ENCODE measurements at regions of chr17 and their contacts with region 1.

Region 1: GRCh38 chr17:43360739-43361505 is 37.9 kb upstream of the ARL4D start:
- DNase-seq: peak; percentile 88 to 98
- H3K4me3 ChIP-seq: peak overlapping the region; percentile 60 to 70 (median 67)
- H3K27ac ChIP-seq: peak overlapping the region; percentile 100
- H3K4me1 ChIP-seq: peaks cover 2 to 9% (median 3%) of the 10 kb centered on the region in 4 experiments; a peak in 5 of 7 replicates
- H3K27me3 ChIP-seq: peaks cover 0 to 17% (median 7%) of the 10 kb centered on the region in 4 experiments; a peak in 5 of 7 replicates
- CTCF ChIP-seq: no peak
- EP300 ChIP-seq: peak in 1 of 2 experiments; percentile 80; a peak in 1 of 3 replicates
- POLR2A ChIP-seq: peak; percentile 100
- RAD21 ChIP-seq: peak in 1 of 2 experiments; percentile 30; a peak in 1 of 4 replicates

Region 2: GRCh38 chr17:43183921-43184320 is 177.0 kb before region 1 on chr17:
- CTCF ChIA-PET with region 1: no interaction called
- POLR2A ChIA-PET with region 1: no interaction called
- DNase-seq: no peak
- H3K4me3 ChIP-seq: no peak overlapping the region
- H3K27ac ChIP-seq: no peak overlapping the region
- H3K4me1 ChIP-seq: no peaks in the 10 kb centered on the region
- H3K27me3 ChIP-seq: no peaks in the 10 kb centered on the region
- CTCF ChIP-seq: no peak
- EP300 ChIP-seq: no peak
- POLR2A ChIP-seq: no peak
- RAD21 ChIP-seq: no peak

Region 3: DNA sequence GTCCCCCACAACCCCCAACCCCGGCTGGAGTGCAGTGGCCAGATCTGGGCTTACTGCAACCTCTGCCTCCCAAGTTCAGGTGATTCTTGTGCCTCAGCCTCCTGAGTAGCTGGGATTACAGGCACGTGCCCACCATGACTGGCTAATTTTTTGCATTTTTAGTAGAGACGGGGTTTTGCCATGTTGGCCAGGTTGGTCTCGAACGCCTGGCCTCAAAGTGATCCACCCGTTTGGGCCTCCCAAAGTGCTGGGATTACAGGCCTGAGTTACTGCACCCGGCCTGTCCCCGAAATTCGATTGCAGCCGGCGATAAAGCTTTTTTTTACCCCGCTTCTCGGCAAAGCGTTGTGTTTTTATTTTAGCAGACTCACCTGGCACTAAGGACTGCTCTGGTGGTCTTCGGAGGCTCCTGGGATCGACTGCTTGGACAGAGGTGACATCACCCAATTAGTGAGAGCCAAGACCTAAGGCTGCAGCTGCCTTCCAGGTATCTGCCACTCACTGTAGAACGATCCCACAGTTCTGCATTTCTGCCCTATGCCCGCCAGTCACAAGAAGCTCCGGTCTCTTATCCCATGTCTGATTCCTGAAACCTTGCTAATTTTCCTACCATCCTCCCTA is 44.3 kb before region 1 on chr17:
- CTCF ChIA-PET with region 1: no interaction called
- POLR2A ChIA-PET with region 1: interaction called, 65 read pairs
- DNase-seq: no peak
- H3K4me3 ChIP-seq: no peak overlapping the region
- H3K27ac ChIP-seq: no peak overlapping the region
- H3K4me1 ChIP-seq: no peaks in the 10 kb centered on the region; a peak in 1 of 7 replicates
- H3K27me3 ChIP-seq: no peaks in the 10 kb centered on the region
- CTCF ChIP-seq: no peak
- EP300 ChIP-seq: no peak
- POLR2A ChIP-seq: no peak
- RAD21 ChIP-seq: no peak

Region 4: DNA sequence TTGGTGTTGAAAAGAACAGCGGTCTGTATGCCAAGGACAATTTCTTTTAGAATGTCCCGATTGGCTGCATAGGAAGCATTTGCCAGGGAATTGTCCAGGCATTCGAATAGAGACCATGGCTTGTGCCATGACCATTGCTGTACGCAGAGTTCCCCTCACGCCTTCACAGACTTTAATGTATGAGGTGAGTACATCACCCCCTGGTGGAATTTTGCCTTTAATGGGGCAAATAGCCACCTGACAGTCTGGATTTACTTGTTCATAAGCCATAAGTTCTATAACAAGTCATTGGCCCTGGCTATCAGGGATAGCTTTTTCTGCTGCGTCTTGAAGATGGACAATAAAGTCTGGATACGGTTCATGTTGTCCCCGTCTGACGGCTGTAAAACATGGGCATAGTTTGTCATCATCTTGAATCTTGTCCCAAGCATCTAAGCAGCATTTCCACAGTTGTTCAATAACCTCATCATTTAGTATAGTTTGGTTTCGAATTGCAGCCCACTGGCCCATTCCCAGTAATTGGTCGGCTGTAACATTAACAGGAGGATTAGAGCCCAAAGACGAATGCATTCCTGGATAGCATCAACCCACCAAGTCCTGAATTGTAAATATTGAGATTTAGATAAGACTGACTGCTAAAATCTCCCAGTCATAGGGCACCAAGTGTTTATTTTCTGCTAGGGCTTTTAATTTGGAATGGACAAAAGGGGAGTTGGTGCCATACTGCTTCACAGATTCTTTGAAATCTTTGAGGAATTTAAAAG is 29.9 kb before region 1 on chr17:
- CTCF ChIA-PET with region 1: interaction called, 21 read pairs
- POLR2A ChIA-PET with region 1: interaction called, 46 read pairs
- DNase-seq: no peak
- H3K4me3 ChIP-seq: no peak overlapping the region
- H3K27ac ChIP-seq: no peak overlapping the region
- H3K4me1 ChIP-seq: peaks cover 0 to 2% (median 0%) of the 10 kb centered on the region in 4 experiments; a peak in 2 of 7 replicates
- H3K27me3 ChIP-seq: no peaks in the 10 kb centered on the region
- CTCF ChIP-seq: no peak
- EP300 ChIP-seq: no peak
- POLR2A ChIP-seq: no peak
- RAD21 ChIP-seq: peak in 1 of 2 experiments; percentile 22; a peak in 1 of 4 replicates

Region 5: GRCh38 chr17:43349142-43349541 is 11.8 kb before region 1 on chr17:
- CTCF ChIA-PET with region 1: interaction called, 7 read pairs
- POLR2A ChIA-PET with region 1: interaction called, 41 read pairs
- DNase-seq: no peak
- H3K4me3 ChIP-seq: no peak overlapping the region
- H3K27ac ChIP-seq: no peak overlapping the region
- H3K4me1 ChIP-seq: peaks cover 0 to 10% (median 1%) of the 10 kb centered on the region in 4 experiments; a peak in 3 of 7 replicates
- H3K27me3 ChIP-seq: no peaks in the 10 kb centered on the region
- CTCF ChIP-seq: peak in 2 of 3 experiments; percentile 29 to 47; a peak in 2 of 4 replicates
- EP300 ChIP-seq: no peak
- POLR2A ChIP-seq: no peak
- RAD21 ChIP-seq: peak; percentile 35 to 49; a peak in 3 of 4 replicates

Region 6: DNA sequence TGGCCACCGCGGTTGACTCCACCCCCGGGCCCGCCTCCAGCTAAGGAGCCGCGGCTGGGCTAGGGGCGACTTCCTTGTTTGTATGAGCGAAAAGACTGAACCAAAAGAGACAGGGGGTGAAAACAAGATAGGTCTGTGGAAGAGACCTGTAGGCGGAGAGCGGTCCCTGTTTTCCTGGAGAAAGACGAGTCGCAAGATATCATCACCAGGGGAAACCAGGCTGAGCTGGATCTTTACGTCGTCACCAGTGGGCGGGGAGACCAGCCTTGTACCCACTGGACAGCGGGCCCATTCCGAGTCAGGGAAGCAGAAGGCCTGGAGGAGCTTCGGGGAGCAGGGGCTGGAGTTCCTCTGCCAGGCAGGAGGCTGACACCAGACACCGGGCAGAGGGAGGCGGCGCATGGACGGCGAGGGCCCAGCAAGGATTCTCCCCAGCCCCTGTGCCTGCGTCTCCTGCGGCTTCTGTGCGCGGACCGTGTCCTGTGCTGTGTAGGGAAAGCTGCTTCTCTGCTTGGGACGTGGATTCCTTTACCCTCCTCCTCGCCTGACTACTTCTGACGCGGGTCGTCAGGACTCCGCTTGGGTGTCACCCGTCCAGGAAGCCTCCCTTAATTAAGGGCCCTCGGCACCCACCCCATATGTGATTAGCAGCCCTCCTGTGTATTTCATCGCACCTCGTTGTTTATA is 27.6 kb after region 1 on chr17:
- CTCF ChIA-PET with region 1: interaction called, 10 read pairs
- POLR2A ChIA-PET with region 1: interaction called, 184 read pairs
- DNase-seq: peak in 1 of 2 experiments; percentile 93
- H3K4me3 ChIP-seq: peak overlapping the region; percentile 58 to 81 (median 70)
- H3K27ac ChIP-seq: peak overlapping the region; percentile 85
- H3K4me1 ChIP-seq: peaks cover 0 to 3% (median 0%) of the 10 kb centered on the region in 4 experiments; a peak in 3 of 7 replicates
- H3K27me3 ChIP-seq: no peaks in the 10 kb centered on the region
- CTCF ChIP-seq: no peak
- EP300 ChIP-seq: peak in 1 of 2 experiments; percentile 55; a peak in 1 of 3 replicates
- POLR2A ChIP-seq: peak in 1 of 2 experiments; percentile 61; a peak in 1 of 3 replicates
- RAD21 ChIP-seq: no peak

Region 7: DNA sequence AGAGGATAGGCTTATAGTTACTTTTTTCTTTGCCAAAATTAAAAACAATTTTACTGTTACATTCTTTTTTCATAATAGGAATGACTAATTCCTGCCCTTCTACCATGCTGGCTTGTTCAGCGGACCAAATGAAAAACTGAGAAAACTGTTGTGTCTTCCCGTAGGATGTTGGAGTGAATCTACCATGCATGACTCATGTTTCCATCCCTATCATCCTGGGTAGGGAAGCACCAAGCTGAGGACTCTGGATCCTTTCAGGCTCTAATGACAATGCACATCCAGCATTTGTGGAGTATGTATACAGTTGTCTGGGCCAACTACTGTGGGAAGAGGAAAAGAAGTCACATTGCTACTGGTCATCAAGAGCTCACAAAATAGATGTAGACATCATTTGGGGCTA is 81.8 kb after region 1 on chr17:
- CTCF ChIA-PET with region 1: no interaction called
- POLR2A ChIA-PET with region 1: no interaction called
- DNase-seq: no peak
- H3K4me3 ChIP-seq: no peak overlapping the region
- H3K27ac ChIP-seq: no peak overlapping the region
- H3K4me1 ChIP-seq: peaks cover 0 to 2% (median 0%) of the 10 kb centered on the region in 4 experiments; a peak in 3 of 7 replicates
- H3K27me3 ChIP-seq: no peaks in the 10 kb centered on the region
- CTCF ChIP-seq: no peak
- EP300 ChIP-seq: no peak
- POLR2A ChIP-seq: no peak
- RAD21 ChIP-seq: no peak

Region 8: DNA sequence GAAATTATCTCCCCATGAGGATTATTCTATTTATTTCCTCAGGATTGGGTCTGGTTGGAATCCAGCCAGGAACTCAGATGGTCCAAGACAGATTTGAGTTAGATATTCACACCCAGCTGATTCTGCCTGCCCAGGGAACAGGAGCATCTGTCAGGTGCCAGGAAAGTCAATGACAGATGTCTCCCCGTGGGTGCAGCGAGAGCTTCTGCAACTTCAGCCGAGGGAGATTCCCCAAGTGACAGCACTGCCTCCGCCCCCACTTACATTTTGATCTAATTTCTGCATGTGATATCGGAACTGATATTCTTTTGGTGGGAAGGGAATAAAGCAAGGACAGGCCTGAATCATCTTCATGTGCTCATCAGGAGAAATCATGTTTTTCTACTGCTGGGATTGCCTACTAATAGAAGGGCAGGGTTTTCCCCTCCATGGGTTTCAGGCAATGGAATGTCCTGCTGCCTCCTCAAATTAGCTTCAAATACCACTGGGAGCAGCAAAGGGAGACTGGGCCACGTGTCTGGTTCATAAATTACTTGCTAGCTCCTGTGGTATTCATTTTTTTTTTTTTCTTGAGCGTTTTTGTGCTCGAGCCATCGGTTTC is 107.2 kb after region 1 on chr17:
- CTCF ChIA-PET with region 1: no interaction called
- POLR2A ChIA-PET with region 1: no interaction called
- DNase-seq: no peak
- H3K4me3 ChIP-seq: no peak overlapping the region
- H3K27ac ChIP-seq: no peak overlapping the region
- H3K4me1 ChIP-seq: no peaks in the 10 kb centered on the region
- H3K27me3 ChIP-seq: no peaks in the 10 kb centered on the region
- CTCF ChIP-seq: no peak
- EP300 ChIP-seq: no peak
- POLR2A ChIP-seq: no peak
- RAD21 ChIP-seq: no peak

Region 9: GRCh38 chr17:43483674-43484372 is 122.9 kb after region 1 on chr17 and contains the start of gene DHX8:
- CTCF ChIA-PET with region 1: interaction called, 18 read pairs
- POLR2A ChIA-PET with region 1: interaction called, 39 read pairs
- DNase-seq: peak; percentile 95 to 99
- H3K4me3 ChIP-seq: peak within 1 kb of the TSS; percentile 61 to 84 (median 78)
- H3K27ac ChIP-seq: peak within 1 kb of the TSS; percentile 79
- H3K4me1 ChIP-seq: peaks cover 0 to 6% (median under 1%) of the 10 kb centered on the region in 4 experiments; a peak in 4 of 7 replicates
- H3K27me3 ChIP-seq: no peaks in the 10 kb centered on the region
- CTCF ChIP-seq: peak; percentile 100
- EP300 ChIP-seq: peak in 1 of 2 experiments; percentile 68; a peak in 1 of 3 replicates
- POLR2A ChIP-seq: peak; percentile 77 to 94
- RAD21 ChIP-seq: peak; percentile 100
- total RNA-seq, gene DHX8: 57.0 and 59.4 TPM in 2 replicates

Measured in H1 (cell line).